ENCODE measurements at regions of chr7 and their contacts with region 1.

Region 1: GRCh38 chr7:44633254-44634186 is 27.1 kb downstream of the OGDH start:
- DNase-seq: peak; percentile 53 to 73 (median 69)
- H3K4me3 ChIP-seq: no peak overlapping the region
- H3K4me3 Mint-ChIP-seq: no peak overlapping the region
- H3K27ac ChIP-seq: peak overlapping the region; percentile 27 to 100
- H3K27ac Mint-ChIP-seq: peak overlapping the region; percentile 80 to 100 (median 100)
- H3K4me1 ChIP-seq: peaks cover 96 to 99% of the 10 kb centered on the region in 2 donors
- H3K4me1 Mint-ChIP-seq: peaks cover 98% of the 10 kb centered on the region
- H3K27me3 ChIP-seq: no peaks in the 10 kb centered on the region
- H3K27me3 Mint-ChIP-seq: no peaks in the 10 kb centered on the region
- CTCF ChIP-seq: no peak

Region 2: DNA sequence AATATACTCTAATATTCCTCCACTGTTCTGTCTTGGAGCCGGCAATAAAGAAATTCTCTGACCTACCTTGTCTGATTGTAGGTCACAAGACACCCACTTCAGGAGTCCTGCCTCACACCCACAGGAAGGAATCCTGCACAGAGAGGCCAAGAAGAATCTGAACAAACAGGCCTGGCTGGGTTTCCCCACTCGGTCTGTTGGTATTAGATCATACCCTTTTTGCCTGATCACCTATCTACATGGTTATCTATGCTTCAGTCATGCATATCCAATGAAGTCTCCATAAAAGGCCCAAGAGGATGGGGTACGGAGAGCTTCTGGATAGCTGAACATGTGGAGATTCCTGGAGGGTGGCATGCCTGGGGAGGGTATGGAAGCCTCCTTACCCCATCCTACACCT is 14.8 kb before region 1 on chr7:
- intact Hi-C with region 1: loop called in 1 of 2 experiments (anchors 2 kb)
- DNase-seq: no peak
- H3K4me3 ChIP-seq: no peak overlapping the region
- H3K4me3 Mint-ChIP-seq: no peak overlapping the region
- H3K27ac ChIP-seq: peak overlapping the region in 1 of 2 donors; percentile 61
- H3K27ac Mint-ChIP-seq: peak overlapping the region in 6 of 7 donors; percentile 62 to 98 (median 86)
- H3K4me1 ChIP-seq: peaks cover 58 to 90% of the 10 kb centered on the region in 2 donors
- H3K4me1 Mint-ChIP-seq: peaks cover 84% of the 10 kb centered on the region
- H3K27me3 ChIP-seq: no peaks in the 10 kb centered on the region
- H3K27me3 Mint-ChIP-seq: peaks cover 0 to 4% (median 0%) of the 10 kb centered on the region in 3 donors
- CTCF ChIP-seq: no peak

Region 3: DNA sequence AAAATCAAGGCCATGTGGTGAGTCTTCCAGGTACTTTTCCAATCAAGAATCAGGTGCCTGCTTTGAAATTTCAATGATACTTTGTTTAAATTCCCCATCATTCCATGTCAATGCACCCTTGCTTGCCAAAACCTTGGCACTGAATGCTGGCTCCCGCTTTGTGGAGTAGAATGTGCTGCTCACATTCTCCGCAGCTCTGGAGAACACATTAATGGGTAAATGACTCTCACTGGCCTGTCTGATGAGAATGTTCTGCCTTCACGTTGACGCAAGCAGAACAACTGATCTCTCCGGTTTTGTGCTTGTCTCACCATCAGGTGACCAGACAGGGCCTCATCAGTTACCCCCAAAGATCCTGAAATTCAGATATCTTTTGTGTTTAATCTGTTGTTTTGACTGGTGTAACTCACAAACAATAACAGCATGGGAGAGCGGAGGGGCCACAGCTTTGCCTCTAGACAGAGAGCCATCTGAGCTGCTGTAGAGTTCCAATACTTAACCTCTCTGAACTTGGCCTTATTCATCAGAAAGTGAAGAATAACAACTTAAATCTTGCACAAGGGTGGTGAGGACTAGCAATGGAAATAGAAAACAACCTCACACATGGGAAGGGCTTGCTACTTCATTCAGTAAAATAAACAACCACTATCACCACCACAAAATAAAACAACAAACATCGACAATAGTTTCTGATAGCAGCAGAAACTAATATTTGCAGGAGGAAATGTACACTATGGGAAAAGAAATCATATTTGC is 1564.4 kb after region 1 on chr7:
- intact Hi-C with region 1: no loop called
- DNase-seq: no peak
- H3K4me3 ChIP-seq: no peak overlapping the region
- H3K4me3 Mint-ChIP-seq: no peak overlapping the region
- H3K27ac ChIP-seq: no peak overlapping the region
- H3K27ac Mint-ChIP-seq: no peak overlapping the region
- H3K4me1 ChIP-seq: no peaks in the 10 kb centered on the region
- H3K4me1 Mint-ChIP-seq: no peaks in the 10 kb centered on the region
- H3K27me3 ChIP-seq: no peaks in the 10 kb centered on the region
- H3K27me3 Mint-ChIP-seq: peaks cover 0 to 2% (median 2%) of the 10 kb centered on the region in 3 donors
- CTCF ChIP-seq: no peak

Measured in CD14-positive monocyte (primary cell).